ENCODE measurements at regions of chr6 and their contacts with region 1.

Region 1: GRCh38 chr6:143896126-143896875 is 32.0 kb downstream of the ZC2HC1B start:
- DNase-seq: peak; percentile 44 to 85
- H3K4me3 ChIP-seq: peak overlapping the region; percentile 40; the same call in 1 of the 2 replicates
- H3K27ac ChIP-seq: peak overlapping the region; percentile 60
- H3K4me1 ChIP-seq: peaks cover 15% of the 10 kb centered on the region
- H3K27me3 ChIP-seq: no peaks in the 10 kb centered on the region
- CTCF ChIP-seq: no peak

Region 2: GRCh38 chr6:144049386-144049785 is 153.1 kb after region 1 on chr6:
- CTCF ChIA-PET with region 1: no interaction called
- POLR2A ChIA-PET with region 1: no interaction called
- intact Hi-C with region 1: no loop called
- DNase-seq: no peak
- H3K4me3 ChIP-seq: no peak overlapping the region
- H3K27ac ChIP-seq: no peak overlapping the region
- H3K4me1 ChIP-seq: no peaks in the 10 kb centered on the region
- H3K27me3 ChIP-seq: peaks cover 3% of the 10 kb centered on the region; the same call in 1 of the 2 replicates
- CTCF ChIP-seq: no peak

Region 3: GRCh38 chr6:144190593-144190992 is 294.3 kb after region 1 on chr6:
- CTCF ChIA-PET with region 1: no interaction called
- POLR2A ChIA-PET with region 1: no interaction called
- intact Hi-C with region 1: no loop called
- DNase-seq: no peak
- H3K4me3 ChIP-seq: no peak overlapping the region
- H3K27ac ChIP-seq: no peak overlapping the region
- H3K4me1 ChIP-seq: 0 out of 2 replicates have a peak, but pooled peaks cover 6% of the 10 kb centered on the region
- H3K27me3 ChIP-seq: no peaks in the 10 kb centered on the region
- CTCF ChIP-seq: no peak

Region 4: GRCh38 chr6:144434308-144434990 is 538.1 kb after region 1 on chr6:
- CTCF ChIA-PET with region 1: no interaction called
- POLR2A ChIA-PET with region 1: no interaction called
- intact Hi-C with region 1: no loop called
- DNase-seq: peak; percentile 39 to 52
- H3K4me3 ChIP-seq: no peak overlapping the region
- H3K27ac ChIP-seq: no peak overlapping the region
- H3K4me1 ChIP-seq: 0 out of 2 replicates have a peak, but pooled peaks cover 3% of the 10 kb centered on the region
- H3K27me3 ChIP-seq: no peaks in the 10 kb centered on the region
- CTCF ChIP-seq: no peak

Region 5: DNA sequence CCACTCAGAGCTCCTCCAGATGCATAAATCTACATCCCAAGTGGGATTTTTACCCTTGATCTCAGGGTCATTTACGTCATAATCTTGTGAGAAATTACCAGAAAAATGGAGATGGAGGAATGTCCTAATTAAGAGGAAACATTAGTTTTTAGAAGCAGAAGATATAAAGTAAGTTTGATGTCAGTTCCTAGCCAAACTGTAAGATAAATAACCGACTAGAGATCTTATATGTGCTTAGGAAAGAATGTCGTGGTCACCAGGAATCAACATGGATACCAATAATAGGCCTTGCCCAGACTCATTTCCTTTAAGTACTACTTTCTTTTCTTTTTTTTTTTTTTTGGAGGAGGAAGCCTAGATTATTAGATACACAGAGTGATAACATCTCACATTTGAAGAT is 575.7 kb after region 1 on chr6:
- CTCF ChIA-PET with region 1: no interaction called
- POLR2A ChIA-PET with region 1: interaction called, 17 read pairs
- intact Hi-C with region 1: no loop called
- DNase-seq: no peak
- H3K4me3 ChIP-seq: no peak overlapping the region
- H3K27ac ChIP-seq: no peak overlapping the region
- H3K4me1 ChIP-seq: no peaks in the 10 kb centered on the region
- H3K27me3 ChIP-seq: no peaks in the 10 kb centered on the region
- CTCF ChIP-seq: no peak

Measured in PC-9 (cell line).